Activated CD4-positive, alpha-beta T cell treated with anti-CD3 and anti-CD28 coated beads, Interleukin-2, amount 10 ng/mL, durations not matched to agents 24 days and 14 days (primary cell): ENCODE measurements at regions of chr5 and their contacts with region 1.

Region 1: DNA sequence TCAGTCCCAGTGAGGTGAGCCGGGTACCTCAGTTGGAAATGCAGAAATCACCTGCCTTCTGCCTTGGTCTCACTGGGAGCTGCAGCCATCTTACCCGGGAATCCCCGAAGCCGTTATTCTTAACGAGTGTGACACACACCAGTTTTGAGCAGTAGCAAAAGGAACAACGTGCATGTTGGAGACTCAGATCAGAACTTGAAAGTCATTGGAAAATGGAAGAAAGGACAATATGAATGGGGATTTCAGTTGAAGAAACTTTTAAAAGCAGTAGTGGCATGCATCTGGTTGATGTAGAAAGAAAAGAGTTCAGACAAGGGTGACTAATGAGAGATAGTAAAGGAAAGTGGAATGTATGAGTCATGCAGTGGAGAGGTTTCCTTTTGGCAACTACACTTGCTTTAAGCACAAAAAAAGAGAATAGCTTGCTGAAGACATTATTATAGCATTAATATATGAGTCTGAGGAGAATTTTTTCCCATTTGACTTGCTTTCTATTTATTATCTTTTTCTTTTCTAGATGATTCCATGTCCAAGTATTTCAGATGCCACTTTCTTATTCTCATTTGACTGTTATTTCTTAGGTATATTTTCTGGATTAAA is 44.4 kb upstream of the ANKDD1B start:
- DNase-seq: peak; percentile 83
- H3K4me3 Mint-ChIP-seq: peak overlapping the region; percentile 84
- H3K27ac Mint-ChIP-seq: peak overlapping the region; percentile 98
- H3K4me1 Mint-ChIP-seq: peaks cover 39% of the 10 kb centered on the region
- H3K27me3 Mint-ChIP-seq: peaks cover 2% of the 10 kb centered on the region

Region 2: GRCh38 chr5:75236322-75237316 is 330.2 kb before region 1 on chr5 and contains the start of gene ANKRD31:
- intact Hi-C with region 1: loop called (anchors 5 kb)
- DNase-seq: peak; percentile 97
- H3K4me3 Mint-ChIP-seq: peak within 1 kb of the TSS; percentile 96
- H3K27ac Mint-ChIP-seq: peak within 1 kb of the TSS; percentile 93
- H3K4me1 Mint-ChIP-seq: peaks cover 13% of the 10 kb centered on the region
- H3K27me3 Mint-ChIP-seq: no peaks in the 10 kb centered on the region
- total RNA-seq, gene ANKRD31: 0.33 and 0.47 TPM in 2 replicates

Region 3: GRCh38 chr5:75389430-75389829 is 177.4 kb before region 1 on chr5:
- intact Hi-C with region 1: loop called (anchors 2 kb)
- DNase-seq: no peak
- H3K4me3 Mint-ChIP-seq: no peak overlapping the region
- H3K27ac Mint-ChIP-seq: peak overlapping the region; percentile 50
- H3K4me1 Mint-ChIP-seq: peaks cover 9% of the 10 kb centered on the region
- H3K27me3 Mint-ChIP-seq: no peaks in the 10 kb centered on the region

Region 4: GRCh38 chr5:75450070-75450469 is 116.7 kb before region 1 on chr5:
- intact Hi-C with region 1: no loop called
- DNase-seq: no peak
- H3K4me3 Mint-ChIP-seq: no peak overlapping the region
- H3K27ac Mint-ChIP-seq: no peak overlapping the region
- H3K4me1 Mint-ChIP-seq: no peaks in the 10 kb centered on the region
- H3K27me3 Mint-ChIP-seq: no peaks in the 10 kb centered on the region

Region 5: GRCh38 chr5:75524071-75524470 is 42.7 kb before region 1 on chr5:
- intact Hi-C with region 1: loop called (anchors 1 kb)
- DNase-seq: no peak
- H3K4me3 Mint-ChIP-seq: peak overlapping the region; percentile 53
- H3K27ac Mint-ChIP-seq: peak overlapping the region; percentile 80
- H3K4me1 Mint-ChIP-seq: peaks cover 44% of the 10 kb centered on the region
- H3K27me3 Mint-ChIP-seq: no peaks in the 10 kb centered on the region

Region 6: GRCh38 chr5:75550597-75550996 is 16.2 kb before region 1 on chr5:
- intact Hi-C with region 1: no loop called
- DNase-seq: no peak
- H3K4me3 Mint-ChIP-seq: no peak overlapping the region
- H3K27ac Mint-ChIP-seq: no peak overlapping the region
- H3K4me1 Mint-ChIP-seq: no peaks in the 10 kb centered on the region
- H3K27me3 Mint-ChIP-seq: no peaks in the 10 kb centered on the region

Region 7: GRCh38 chr5:75668977-75669689 is 102.3 kb after region 1 on chr5:
- intact Hi-C with region 1: loop called (anchors 1 kb)
- DNase-seq: peak; percentile 83
- H3K4me3 Mint-ChIP-seq: peak overlapping the region; percentile 79
- H3K27ac Mint-ChIP-seq: peak overlapping the region; percentile 95
- H3K4me1 Mint-ChIP-seq: peaks cover 36% of the 10 kb centered on the region
- H3K27me3 Mint-ChIP-seq: no peaks in the 10 kb centered on the region